Activated naive CD4-positive, alpha-beta T cell treated with anti-CD3 and anti-CD28 coated beads for 36 hours (primary cell): ENCODE measurements at regions of chr1 and their contacts with region 1.

Region 1: GRCh38 chr1:180252638-180253536 is 22.8 kb downstream of the LHX4 start:
- DNase-seq: peak; percentile 89
- H3K4me3 Mint-ChIP-seq: no peak overlapping the region
- H3K27ac Mint-ChIP-seq: no peak overlapping the region
- H3K4me1 Mint-ChIP-seq: no peaks in the 10 kb centered on the region
- H3K27me3 Mint-ChIP-seq: peaks cover 36% of the 10 kb centered on the region

Region 2: GRCh38 chr1:180188091-180188506 is 64.8 kb before region 1 on chr1:
- CTCF ChIA-PET with region 1: interaction called, 3 read pairs
- intact Hi-C with region 1: loop called (anchors 2 kb)
- DNase-seq: peak; percentile 51
- H3K4me3 Mint-ChIP-seq: no peak overlapping the region
- H3K27ac Mint-ChIP-seq: no peak overlapping the region
- H3K4me1 Mint-ChIP-seq: no peaks in the 10 kb centered on the region
- H3K27me3 Mint-ChIP-seq: no peaks in the 10 kb centered on the region

Region 3: GRCh38 chr1:180241716-180242526 is 11.0 kb before region 1 on chr1:
- CTCF ChIA-PET with region 1: interaction called, 12 read pairs
- intact Hi-C with region 1: no loop called
- DNase-seq: no peak
- H3K4me3 Mint-ChIP-seq: no peak overlapping the region
- H3K27ac Mint-ChIP-seq: no peak overlapping the region
- H3K4me1 Mint-ChIP-seq: peaks cover 7% of the 10 kb centered on the region
- H3K27me3 Mint-ChIP-seq: peaks cover 58% of the 10 kb centered on the region

Region 4: DNA sequence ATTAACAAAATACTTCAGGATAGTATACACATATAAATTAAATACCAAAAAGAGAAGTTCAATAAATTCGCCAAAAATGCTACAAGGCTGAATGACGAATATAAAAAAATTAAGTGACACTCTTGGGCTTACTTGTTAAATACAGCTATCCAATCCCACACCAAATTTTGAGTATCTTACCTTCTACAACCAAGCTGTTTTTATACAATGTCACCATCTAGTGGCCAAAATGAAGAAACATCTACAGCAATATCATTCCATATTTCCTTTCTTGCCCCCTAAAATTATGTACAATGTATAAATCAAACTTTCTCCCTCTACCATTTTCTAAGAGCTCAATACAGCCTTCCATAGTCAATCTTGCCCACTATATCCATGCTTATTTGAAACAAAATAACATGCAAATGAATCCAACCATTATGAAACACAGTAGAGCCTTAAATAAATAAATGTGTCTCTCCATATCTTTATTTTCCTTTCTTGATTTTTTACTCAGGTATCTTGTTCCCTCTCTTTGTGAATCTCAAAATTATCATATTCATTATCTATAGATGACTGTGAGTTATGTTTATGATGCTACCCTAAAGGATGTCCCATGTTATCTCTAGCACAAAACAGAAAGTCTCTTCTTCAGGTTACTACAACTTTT is 163.2 kb after region 1 on chr1:
- CTCF ChIA-PET with region 1: interaction called, 22 read pairs
- intact Hi-C with region 1: loop called (anchors 1 kb)
- DNase-seq: no peak
- H3K4me3 Mint-ChIP-seq: no peak overlapping the region
- H3K27ac Mint-ChIP-seq: no peak overlapping the region
- H3K4me1 Mint-ChIP-seq: no peaks in the 10 kb centered on the region
- H3K27me3 Mint-ChIP-seq: no peaks in the 10 kb centered on the region

Region 5: DNA sequence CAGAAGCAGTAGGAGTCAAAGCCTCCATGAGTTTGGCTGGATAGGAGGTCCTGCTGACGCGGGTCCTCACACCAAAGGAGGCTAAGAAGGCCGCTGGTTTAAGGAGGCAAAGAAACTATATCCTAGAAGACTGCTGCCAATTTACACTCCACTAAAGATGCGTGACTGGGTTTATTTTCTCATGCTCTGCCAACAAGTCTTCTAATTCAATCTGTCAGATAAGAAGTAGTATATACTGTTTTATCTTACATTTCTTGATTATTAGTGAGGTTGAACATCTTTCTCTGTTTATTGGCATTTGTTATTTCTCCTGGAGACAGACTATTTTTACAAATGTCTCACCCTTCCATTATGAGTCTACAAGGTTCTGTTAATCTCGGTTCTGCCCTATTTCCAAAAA is 215.4 kb after region 1 on chr1:
- CTCF ChIA-PET with region 1: interaction called, 15 read pairs
- intact Hi-C with region 1: no loop called
- DNase-seq: no peak
- H3K4me3 Mint-ChIP-seq: no peak overlapping the region
- H3K27ac Mint-ChIP-seq: no peak overlapping the region
- H3K4me1 Mint-ChIP-seq: peaks cover 13% of the 10 kb centered on the region
- H3K27me3 Mint-ChIP-seq: no peaks in the 10 kb centered on the region

Region 6: DNA sequence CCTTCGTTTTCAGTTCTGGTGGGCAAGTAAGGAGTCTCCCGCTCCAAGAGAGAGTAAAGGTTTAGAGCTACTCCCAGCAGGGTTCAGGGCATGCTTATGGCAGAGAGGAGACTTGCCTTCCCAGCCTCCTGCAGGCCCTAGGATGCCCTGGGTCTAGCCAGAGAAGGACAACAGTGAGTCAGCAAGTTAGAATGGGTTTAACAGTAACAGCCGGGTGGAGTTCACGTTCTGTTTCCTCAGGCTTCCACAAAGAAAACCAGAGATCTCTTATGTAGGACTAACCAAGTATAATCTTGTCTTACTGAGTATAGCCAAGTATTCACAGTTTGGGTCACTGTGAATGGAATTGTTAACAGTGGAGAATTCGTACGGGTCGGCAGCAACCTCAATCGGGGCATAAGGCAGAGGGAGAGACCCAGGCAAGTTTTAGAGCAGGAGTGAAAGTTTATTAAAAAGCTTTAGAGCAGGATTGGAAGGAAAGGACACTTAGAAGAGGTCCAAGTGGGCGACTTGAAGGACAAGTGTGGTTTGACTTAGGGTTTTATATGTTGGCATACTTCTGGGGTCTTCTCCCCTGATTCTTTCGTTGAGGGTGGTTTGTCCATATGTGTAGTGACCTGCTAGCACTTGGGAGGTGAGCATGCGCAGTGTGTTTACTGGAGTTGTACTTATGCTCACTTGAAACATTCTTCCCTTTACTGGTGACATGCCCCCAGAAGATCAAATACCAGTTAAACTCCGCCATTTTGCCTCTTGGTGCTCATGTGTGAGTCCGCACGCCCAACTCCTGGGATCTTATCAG is 310.3 kb after region 1 on chr1:
- CTCF ChIA-PET with region 1: no interaction called
- intact Hi-C with region 1: no loop called
- DNase-seq: no peak
- H3K4me3 Mint-ChIP-seq: no peak overlapping the region
- H3K27ac Mint-ChIP-seq: no peak overlapping the region
- H3K4me1 Mint-ChIP-seq: no peaks in the 10 kb centered on the region
- H3K27me3 Mint-ChIP-seq: peaks cover 7% of the 10 kb centered on the region

Region 7: GRCh38 chr1:180863158-180863775 is 610.4 kb after region 1 on chr1:
- CTCF ChIA-PET with region 1: no interaction called
- intact Hi-C with region 1: loop called (anchors 5 kb)
- DNase-seq: peak; percentile 34
- H3K4me3 Mint-ChIP-seq: no peak overlapping the region
- H3K27ac Mint-ChIP-seq: no peak overlapping the region
- H3K4me1 Mint-ChIP-seq: peaks cover 2% of the 10 kb centered on the region
- H3K27me3 Mint-ChIP-seq: no peaks in the 10 kb centered on the region